ENCODE measurements at regions of chr6 and their contacts with region 1.

Region 1: GRCh38 chr6:158231551-158232315 is 63.6 kb downstream of the GTF2H5 start:
- DNase-seq: peak; percentile 58 to 91 (median 71)
- ATAC-seq: peak; percentile 74
- H3K4me3 ChIP-seq: peak overlapping the region; percentile 63
- H3K4me3 Mint-ChIP-seq: peak overlapping the region; percentile 87
- H3K27ac ChIP-seq: peak overlapping the region; percentile 59 to 71
- H3K27ac Mint-ChIP-seq: peak overlapping the region; percentile 92
- H3K4me1 ChIP-seq: peaks cover 19% of the 10 kb centered on the region
- H3K4me1 Mint-ChIP-seq: peaks cover 40% of the 10 kb centered on the region
- H3K27me3 ChIP-seq: no peaks in the 10 kb centered on the region
- H3K27me3 Mint-ChIP-seq: no peaks in the 10 kb centered on the region
- CTCF ChIP-seq: no peak

Region 2: DNA sequence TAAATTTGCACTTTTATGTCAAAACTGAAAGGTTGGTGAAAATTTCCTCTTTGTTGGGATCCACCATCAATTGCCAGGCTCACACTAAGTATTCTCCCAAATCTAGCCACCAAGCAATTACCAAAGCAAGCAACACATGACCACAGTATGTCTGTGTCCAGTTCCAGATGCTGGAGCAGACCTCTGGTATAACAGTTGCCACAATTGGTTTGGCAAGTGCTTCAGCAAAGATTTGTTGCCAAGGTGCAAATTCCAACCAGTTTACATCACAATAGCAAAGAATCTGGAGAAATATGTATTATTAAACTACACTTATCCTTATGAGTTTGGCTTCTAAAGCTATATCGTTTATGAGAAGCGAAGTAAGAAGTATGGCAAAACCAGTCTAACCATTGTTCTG is 57.2 kb before region 1 on chr6:
- CTCF ChIA-PET with region 1: no interaction called
- POLR2A ChIA-PET with region 1: no interaction called
- intact Hi-C with region 1: no loop called
- DNase-seq: no peak
- ATAC-seq: no peak
- H3K4me3 ChIP-seq: no peak overlapping the region
- H3K4me3 Mint-ChIP-seq: no peak overlapping the region
- H3K27ac ChIP-seq: no peak overlapping the region
- H3K27ac Mint-ChIP-seq: no peak overlapping the region
- H3K4me1 ChIP-seq: no peaks in the 10 kb centered on the region
- H3K4me1 Mint-ChIP-seq: peaks cover 43% of the 10 kb centered on the region
- H3K27me3 ChIP-seq: no peaks in the 10 kb centered on the region
- H3K27me3 Mint-ChIP-seq: no peaks in the 10 kb centered on the region
- CTCF ChIP-seq: no peak

Region 3: GRCh38 chr6:158270389-158271127 is 38.8 kb after region 1 on chr6:
- CTCF ChIA-PET with region 1: no interaction called
- POLR2A ChIA-PET with region 1: interaction called, 8 read pairs
- intact Hi-C with region 1: loop called in 1 of 2 experiments (anchors 5 kb)
- DNase-seq: peak in 1 of 14 experiments; percentile 8
- ATAC-seq: no peak
- H3K4me3 ChIP-seq: no peak overlapping the region
- H3K4me3 Mint-ChIP-seq: peak overlapping the region; percentile 21
- H3K27ac ChIP-seq: peak overlapping the region; percentile 10 to 30
- H3K27ac Mint-ChIP-seq: peak overlapping the region; percentile 74
- H3K4me1 ChIP-seq: peaks cover 16% of the 10 kb centered on the region
- H3K4me1 Mint-ChIP-seq: peaks cover 34% of the 10 kb centered on the region
- H3K27me3 ChIP-seq: no peaks in the 10 kb centered on the region
- H3K27me3 Mint-ChIP-seq: no peaks in the 10 kb centered on the region
- CTCF ChIP-seq: no peak

Region 4: GRCh38 chr6:158284007-158284875 is 52.5 kb after region 1 on chr6:
- CTCF ChIA-PET with region 1: interaction called, 4 read pairs
- POLR2A ChIA-PET with region 1: no interaction called
- intact Hi-C with region 1: loop called in 1 of 2 experiments (anchors 5 kb)
- DNase-seq: peak in 4 of 14 experiments; percentile 25 to 71 (median 62)
- ATAC-seq: peak; percentile 78
- H3K4me3 ChIP-seq: no peak overlapping the region
- H3K4me3 Mint-ChIP-seq: peak overlapping the region; percentile 52
- H3K27ac ChIP-seq: peak overlapping the region in 1 of 2 donors; percentile 69
- H3K27ac Mint-ChIP-seq: peak overlapping the region; percentile 77
- H3K4me1 ChIP-seq: peaks cover 31% of the 10 kb centered on the region
- H3K4me1 Mint-ChIP-seq: peaks cover 54% of the 10 kb centered on the region
- H3K27me3 ChIP-seq: no peaks in the 10 kb centered on the region
- H3K27me3 Mint-ChIP-seq: no peaks in the 10 kb centered on the region
- CTCF ChIP-seq: no peak

Region 5: GRCh38 chr6:158290659-158291058 is 58.9 kb after region 1 on chr6:
- CTCF ChIA-PET with region 1: no interaction called
- POLR2A ChIA-PET with region 1: interaction called, 5 read pairs
- intact Hi-C with region 1: loop called (anchors 5 kb)
- DNase-seq: peak; percentile 33 to 88 (median 45)
- ATAC-seq: peak; percentile 98
- H3K4me3 ChIP-seq: peak overlapping the region; percentile 4
- H3K4me3 Mint-ChIP-seq: peak overlapping the region; percentile 80
- H3K27ac ChIP-seq: peak overlapping the region; percentile 36 to 42
- H3K27ac Mint-ChIP-seq: peak overlapping the region; percentile 91
- H3K4me1 ChIP-seq: peaks cover 9% of the 10 kb centered on the region
- H3K4me1 Mint-ChIP-seq: peaks cover 56% of the 10 kb centered on the region
- H3K27me3 ChIP-seq: no peaks in the 10 kb centered on the region
- H3K27me3 Mint-ChIP-seq: no peaks in the 10 kb centered on the region
- CTCF ChIP-seq: no peak

Region 6: DNA sequence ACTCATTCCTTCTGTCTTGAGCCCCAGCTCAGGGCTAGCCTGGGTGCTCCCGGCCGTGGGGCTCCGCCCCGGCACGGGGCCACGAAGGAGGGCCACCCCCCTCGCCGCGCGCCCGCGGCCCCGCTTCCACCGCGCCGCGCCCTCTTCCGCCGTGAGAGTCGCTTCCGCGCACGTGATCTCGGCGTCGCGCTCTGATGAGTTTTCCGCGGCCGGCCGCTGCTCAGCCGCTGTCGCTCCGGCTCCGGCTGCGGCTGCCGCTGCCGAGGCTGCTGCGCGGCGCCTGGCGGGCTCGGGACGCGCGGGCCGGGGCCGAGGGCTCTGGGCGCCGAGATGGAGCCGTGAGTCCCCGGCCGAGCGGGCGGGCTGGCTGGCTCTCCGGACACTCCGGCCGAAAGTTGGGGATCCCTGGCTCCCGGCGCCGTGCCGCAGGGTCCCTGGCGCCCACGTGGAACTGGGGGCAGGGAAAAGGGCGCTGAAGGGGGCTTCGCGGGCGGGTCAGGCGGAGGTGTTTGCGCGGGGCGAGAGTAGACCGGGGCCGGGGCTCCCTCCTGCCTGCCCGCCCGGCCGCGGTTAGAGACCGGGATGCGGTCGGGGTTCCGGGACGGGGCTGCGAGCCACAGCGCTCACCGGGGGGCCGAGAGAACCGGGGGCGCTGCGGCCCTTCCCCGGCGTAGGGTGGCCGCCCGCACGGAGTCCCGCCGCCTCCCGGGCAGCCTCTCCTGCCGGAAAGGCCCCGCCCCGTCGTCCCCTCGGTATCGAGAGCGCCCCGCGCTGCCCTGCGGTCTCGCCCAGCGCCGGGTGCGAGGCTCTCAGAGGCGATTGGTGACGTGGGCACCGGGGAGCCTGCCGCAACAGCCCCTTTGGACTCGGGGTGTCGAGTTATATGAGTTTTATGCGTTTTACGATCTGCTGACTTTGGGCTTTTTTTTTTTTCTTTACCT is 328.4 kb after region 1 on chr6 and contains the start of gene TMEM181:
- CTCF ChIA-PET with region 1: no interaction called
- POLR2A ChIA-PET with region 1: interaction called, 5 read pairs
- intact Hi-C with region 1: loop called in 1 of 2 experiments (anchors 2 kb)
- DNase-seq: peak; percentile 76 to 96 (median 86)
- ATAC-seq: peak; percentile 91
- H3K4me3 ChIP-seq: peak within 1 kb of the TSS; percentile 79
- H3K4me3 Mint-ChIP-seq: peak within 1 kb of the TSS; percentile 96
- H3K27ac ChIP-seq: peak within 1 kb of the TSS; percentile 59 to 78
- H3K27ac Mint-ChIP-seq: peak within 1 kb of the TSS; percentile 87
- H3K4me1 ChIP-seq: peaks cover 52% of the 10 kb centered on the region
- H3K4me1 Mint-ChIP-seq: peaks cover 48% of the 10 kb centered on the region
- H3K27me3 ChIP-seq: no peaks in the 10 kb centered on the region
- H3K27me3 Mint-ChIP-seq: no peaks in the 10 kb centered on the region
- CTCF ChIP-seq: no peak
- total RNA-seq, gene TMEM181: 10.2 to 10.9 TPM

Region 7: GRCh38 chr6:158999666-159000403 is 768.1 kb after region 1 on chr6 and contains the start of gene RSPH3:
- CTCF ChIA-PET with region 1: no interaction called
- POLR2A ChIA-PET with region 1: no interaction called
- intact Hi-C with region 1: loop called in 1 of 2 experiments (anchors 10 kb)
- DNase-seq: peak; percentile 70 to 93 (median 84)
- ATAC-seq: peak; percentile 87
- H3K4me3 ChIP-seq: peak within 1 kb of the TSS; percentile 94
- H3K4me3 Mint-ChIP-seq: peak within 1 kb of the TSS; percentile 97
- H3K27ac ChIP-seq: peak within 1 kb of the TSS; percentile 50 to 55
- H3K27ac Mint-ChIP-seq: peak within 1 kb of the TSS; percentile 80
- H3K4me1 ChIP-seq: peaks cover 9% of the 10 kb centered on the region
- H3K4me1 Mint-ChIP-seq: peaks cover 23% of the 10 kb centered on the region
- H3K27me3 ChIP-seq: no peaks in the 10 kb centered on the region
- H3K27me3 Mint-ChIP-seq: no peaks in the 10 kb centered on the region
- CTCF ChIP-seq: no peak
- total RNA-seq, gene RSPH3: 0.59 to 1.1 TPM